Naive thymus-derived CD4-positive, alpha-beta T cell (primary cell): ENCODE measurements at regions of chr10 and their contacts with region 1.

Region 1: DNA sequence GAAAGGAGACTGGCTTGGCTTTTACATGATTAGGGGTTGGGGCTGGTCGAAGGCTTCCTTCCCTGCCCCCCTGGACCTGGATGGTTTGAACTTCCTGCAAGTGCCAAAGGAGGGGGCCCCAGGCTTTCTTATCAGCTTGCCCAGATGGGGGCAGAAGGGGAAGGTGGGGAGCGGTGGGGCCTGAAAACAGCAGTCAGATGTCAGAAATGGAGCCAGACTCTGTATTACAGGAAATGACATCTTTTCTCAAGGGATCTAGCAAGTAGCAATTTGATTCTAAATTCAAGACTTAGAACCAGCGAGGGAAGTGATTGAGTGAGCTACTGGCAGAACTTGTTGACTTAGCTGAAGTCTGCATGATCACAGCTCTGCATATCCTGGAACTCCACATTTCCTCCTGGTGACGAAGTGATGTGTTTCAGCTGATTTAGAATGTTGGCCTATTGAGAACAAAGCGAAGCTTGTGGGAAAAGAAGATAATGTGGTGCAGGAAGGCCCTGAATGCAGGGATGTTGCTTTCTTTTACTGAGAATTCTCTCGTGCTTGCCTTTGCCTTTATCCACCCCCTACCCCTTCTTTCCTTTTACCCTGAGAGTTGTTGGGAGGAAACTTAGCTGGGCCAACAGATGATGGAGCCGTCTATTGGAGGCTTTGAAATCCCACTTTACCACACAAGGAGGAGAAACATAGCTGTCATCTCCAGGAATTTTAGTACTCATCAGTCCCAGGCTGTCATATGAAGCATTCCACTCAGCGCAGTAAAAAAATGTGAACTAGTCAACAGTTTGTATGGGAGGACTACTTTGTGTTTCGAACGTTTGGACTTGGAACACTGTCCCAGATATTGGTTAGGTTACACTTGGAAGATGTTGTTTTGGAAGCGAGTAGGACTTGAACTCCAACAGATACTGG is 43.2 kb downstream of the CCNY start:
- DNase-seq: peak in 7 of 9 donors; percentile 16 to 56 (median 34)
- ATAC-seq: peak; percentile 73
- H3K4me3 ChIP-seq: no peak overlapping the region
- H3K4me3 Mint-ChIP-seq: peak overlapping the region; percentile 18 to 74 (median 58)
- H3K27ac ChIP-seq: peak overlapping the region; percentile 12
- H3K27ac Mint-ChIP-seq: peak overlapping the region; percentile 41 to 90 (median 75)
- H3K4me1 ChIP-seq: peaks cover 9 to 26% of the 10 kb centered on the region in 2 donors
- H3K4me1 Mint-ChIP-seq: peaks cover 40 to 92% (median 77%) of the 10 kb centered on the region in 7 donors
- H3K27me3 ChIP-seq: no peaks in the 10 kb centered on the region
- H3K27me3 Mint-ChIP-seq: no peaks in the 10 kb centered on the region

Region 2: GRCh38 chr10:35316218-35316967 is 63.1 kb before region 1 on chr10:
- CTCF ChIA-PET with region 1: no interaction called
- POLR2A ChIA-PET with region 1: no interaction called
- intact Hi-C with region 1: no loop called
- DNase-seq: no peak
- ATAC-seq: no peak
- H3K4me3 ChIP-seq: no peak overlapping the region
- H3K4me3 Mint-ChIP-seq: no peak overlapping the region
- H3K27ac ChIP-seq: no peak overlapping the region
- H3K27ac Mint-ChIP-seq: peak overlapping the region in 3 of 9 donors; percentile 15 to 38 (median 19)
- H3K4me1 ChIP-seq: no peaks in the 10 kb centered on the region
- H3K4me1 Mint-ChIP-seq: peaks cover 0 to 17% (median 11%) of the 10 kb centered on the region in 7 donors
- H3K27me3 ChIP-seq: no peaks in the 10 kb centered on the region
- H3K27me3 Mint-ChIP-seq: no peaks in the 10 kb centered on the region

Region 3: GRCh38 chr10:35400595-35401268 is 21.2 kb after region 1 on chr10:
- CTCF ChIA-PET with region 1: no interaction called
- POLR2A ChIA-PET with region 1: no interaction called
- intact Hi-C with region 1: loop called in 1 of 2 experiments (anchors 2 kb)
- DNase-seq: no peak
- ATAC-seq: no peak
- H3K4me3 ChIP-seq: no peak overlapping the region
- H3K4me3 Mint-ChIP-seq: no peak overlapping the region
- H3K27ac ChIP-seq: no peak overlapping the region
- H3K27ac Mint-ChIP-seq: no peak overlapping the region
- H3K4me1 ChIP-seq: no peaks in the 10 kb centered on the region
- H3K4me1 Mint-ChIP-seq: peaks cover 2 to 52% (median 43%) of the 10 kb centered on the region in 7 donors
- H3K27me3 ChIP-seq: no peaks in the 10 kb centered on the region
- H3K27me3 Mint-ChIP-seq: no peaks in the 10 kb centered on the region